ENCODE measurements at regions of chr15 and their contacts with region 1.

Region 1: DNA sequence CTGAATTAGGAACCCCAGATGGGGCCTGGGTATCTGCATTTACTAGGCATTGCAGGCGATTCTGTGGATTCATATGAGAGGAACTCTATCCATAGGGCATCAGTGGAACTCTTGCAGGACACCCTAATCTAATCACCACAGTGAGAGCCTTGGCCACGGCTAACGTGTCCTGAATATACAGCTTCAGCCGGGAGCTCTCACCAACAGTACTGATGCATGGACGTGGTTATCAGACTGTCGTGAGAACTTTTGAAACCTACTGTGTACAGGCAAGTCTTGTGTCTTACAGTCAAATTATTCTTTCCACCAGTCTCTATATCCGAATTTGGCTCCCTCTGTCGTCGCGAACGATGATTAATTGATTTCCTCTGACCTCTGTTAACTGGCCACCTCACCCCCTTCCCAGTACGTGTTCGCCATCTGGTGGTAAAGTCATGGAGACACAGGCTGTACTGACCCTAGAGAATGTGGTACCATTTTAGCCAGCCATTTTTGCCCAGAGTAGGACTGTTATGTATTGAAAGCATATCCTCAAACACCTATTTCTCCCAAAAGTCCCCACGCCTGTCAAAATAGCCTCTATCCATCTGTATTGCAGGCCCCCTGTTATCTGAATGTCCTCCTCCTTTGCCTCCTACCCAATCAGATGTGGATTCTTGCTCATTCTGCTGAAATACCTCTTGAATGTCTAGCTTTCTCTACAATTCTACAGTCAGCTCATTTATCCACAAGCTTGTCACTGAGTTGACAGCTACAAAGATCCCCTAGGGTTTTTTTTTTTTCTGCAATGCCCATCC is 39.7 kb downstream of the GLDN start:
- DNase-seq: peak; percentile 64
- ATAC-seq: peak; percentile 84
- H3K4me3 ChIP-seq: no peak overlapping the region
- H3K27ac ChIP-seq: no peak overlapping the region
- H3K4me1 ChIP-seq: peaks cover 8% of the 10 kb centered on the region
- H3K27me3 ChIP-seq: peaks cover 38% of the 10 kb centered on the region
- CTCF ChIP-seq: peak; percentile 97
- POLR2A ChIP-seq: no peak
- RAD21 ChIP-seq: peak; percentile 98

Region 2: GRCh38 chr15:51227940-51228783 is 153.0 kb before region 1 on chr15:
- CTCF ChIA-PET with region 1: interaction called, 6 read pairs
- POLR2A ChIA-PET with region 1: no interaction called
- dilution Hi-C with region 1: no loop called
- in situ Hi-C with region 1: no loop called
- intact Hi-C with region 1: loop called (anchors 1 kb)
- DNase-seq: peak; percentile 89
- ATAC-seq: peak; percentile 80
- H3K4me3 ChIP-seq: no peak overlapping the region
- H3K27ac ChIP-seq: no peak overlapping the region
- H3K4me1 ChIP-seq: peaks cover 12% of the 10 kb centered on the region
- H3K27me3 ChIP-seq: no peaks in the 10 kb centered on the region
- CTCF ChIP-seq: no peak
- POLR2A ChIP-seq: no peak
- RAD21 ChIP-seq: no peak

Region 3: DNA sequence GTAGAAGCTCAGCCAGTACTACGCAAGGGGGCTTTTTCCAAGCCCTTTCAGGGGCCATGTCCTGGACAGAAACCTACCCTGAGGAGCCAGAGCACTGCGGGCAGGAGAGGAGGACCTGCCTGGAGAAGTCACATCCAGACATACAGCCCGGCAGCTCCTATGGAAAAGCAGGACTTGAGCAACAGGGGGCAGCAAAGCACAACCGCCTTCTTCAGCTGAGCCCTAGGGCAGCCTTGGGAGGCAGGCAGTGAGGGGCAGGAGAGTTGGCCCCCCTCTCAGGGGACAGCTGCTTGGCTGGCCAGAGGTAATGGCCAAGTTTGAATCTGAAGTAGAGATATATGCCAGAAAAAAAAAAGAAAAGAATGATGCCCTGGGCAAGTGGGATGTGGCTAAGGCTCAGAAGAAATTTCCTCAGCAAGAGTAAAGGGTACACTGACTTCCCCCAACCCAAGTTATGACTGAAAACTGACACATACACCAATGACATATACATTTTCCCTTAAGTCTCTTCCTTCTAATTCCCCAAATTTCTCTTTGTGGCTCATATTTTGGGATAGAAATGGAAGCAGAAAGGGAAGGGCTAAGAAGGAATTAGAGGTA is 99.7 kb before region 1 on chr15:
- CTCF ChIA-PET with region 1: interaction called, 89 read pairs
- POLR2A ChIA-PET with region 1: no interaction called
- dilution Hi-C with region 1: no loop called
- in situ Hi-C with region 1: loop called (anchors 5 kb)
- intact Hi-C with region 1: loop called (anchors 1 kb)
- DNase-seq: peak; percentile 53
- ATAC-seq: peak; percentile 99
- H3K4me3 ChIP-seq: no peak overlapping the region
- H3K27ac ChIP-seq: no peak overlapping the region
- H3K4me1 ChIP-seq: no peaks in the 10 kb centered on the region; the same call in 1 of the 2 replicates
- H3K27me3 ChIP-seq: peaks cover 50% of the 10 kb centered on the region
- CTCF ChIP-seq: peak; percentile 82
- POLR2A ChIP-seq: no peak
- RAD21 ChIP-seq: peak; percentile 87

Region 4: GRCh38 chr15:51286791-51287190 is 94.4 kb before region 1 on chr15:
- CTCF ChIA-PET with region 1: interaction called, 89 read pairs
- POLR2A ChIA-PET with region 1: no interaction called
- dilution Hi-C with region 1: no loop called
- in situ Hi-C with region 1: loop called (anchors 5 kb)
- intact Hi-C with region 1: loop called (anchors 1 kb)
- DNase-seq: no peak
- ATAC-seq: no peak
- H3K4me3 ChIP-seq: no peak overlapping the region
- H3K27ac ChIP-seq: no peak overlapping the region
- H3K4me1 ChIP-seq: no peaks in the 10 kb centered on the region; the same call in 1 of the 2 replicates
- H3K27me3 ChIP-seq: peaks cover 47% of the 10 kb centered on the region
- CTCF ChIP-seq: no peak
- POLR2A ChIP-seq: no peak
- RAD21 ChIP-seq: no peak

Measured in IMR-90 (cell line).